GM12878 (cell line): ENCODE measurements at regions of chr1 and their contacts with region 1.

Region 1: DNA sequence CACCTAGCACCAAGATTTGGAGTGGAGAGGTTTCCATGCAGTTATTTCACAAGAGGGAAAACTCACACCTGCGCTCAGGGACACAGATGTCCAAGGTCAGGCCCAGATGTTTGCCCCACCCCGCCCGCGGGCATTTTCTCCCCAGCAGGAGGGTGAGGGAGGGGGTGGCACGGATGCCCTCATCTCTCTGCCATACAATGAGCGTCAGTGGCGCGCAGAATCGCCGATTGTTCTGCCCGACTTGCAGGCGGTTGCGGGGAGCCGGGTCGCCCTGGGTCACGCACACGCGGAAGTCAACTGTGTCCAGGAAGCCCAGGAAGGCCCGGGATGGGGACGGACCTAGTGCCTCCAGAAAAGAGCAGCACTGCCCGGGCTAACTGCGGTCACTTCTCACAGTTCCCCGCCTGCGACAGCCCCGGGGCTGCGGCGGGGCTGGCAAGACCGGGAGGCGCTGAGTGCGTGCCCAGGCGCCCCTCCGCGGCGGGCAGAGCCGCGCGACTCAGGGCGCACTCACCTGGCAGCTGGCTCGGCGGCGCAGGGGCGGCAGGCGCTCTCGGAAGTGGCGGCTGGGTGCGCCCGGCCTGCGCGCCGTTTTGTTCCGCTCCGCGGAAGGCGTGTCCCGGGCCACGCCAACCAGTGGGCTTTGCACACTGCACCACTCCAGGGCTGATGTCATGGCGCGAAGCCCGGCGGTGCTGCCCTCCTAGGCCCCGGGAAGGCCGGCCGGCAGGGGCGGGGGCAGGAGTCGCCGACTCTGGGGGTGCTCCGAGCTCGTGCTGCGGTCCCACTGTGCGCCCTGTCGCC is at the start of gene CSRP1:
- DNase-seq: peak; percentile 39
- ATAC-seq: peak; percentile 91
- H3K4me3 ChIP-seq: peak within 1 kb of the TSS; percentile 95
- H3K27ac ChIP-seq: peak within 1 kb of the TSS; percentile 83
- H3K4me1 ChIP-seq: peaks cover 37% of the 10 kb centered on the region
- H3K27me3 ChIP-seq: no peaks in the 10 kb centered on the region
- CTCF ChIP-seq: peak in 1 of 3 experiments; percentile 21; a peak in 1 of 6 replicates
- EP300 ChIP-seq: no peak
- POLR2A ChIP-seq: peak; percentile 96
- RAD21 ChIP-seq: no peak
- polyA plus RNA-seq, gene CSRP1: 23.4 to 24.3 TPM

Region 2: GRCh38 chr1:201370500-201370899 is 136.3 kb before region 1 on chr1:
- CTCF ChIA-PET with region 1: no interaction called
- POLR2A ChIA-PET with region 1: no interaction called
- RAD21 ChIA-PET with region 1: no interaction called
- SMC1A ChIA-PET with region 1: no interaction called
- in situ Hi-C with region 1: no loop called
- intact Hi-C with region 1: no loop called
- DNase-seq: no peak
- ATAC-seq: no peak
- H3K4me3 ChIP-seq: no peak overlapping the region
- H3K27ac ChIP-seq: no peak overlapping the region
- H3K4me1 ChIP-seq: no peaks in the 10 kb centered on the region
- H3K27me3 ChIP-seq: peaks cover 3 to 6% of the 10 kb centered on the region in 2 experiments; a peak in 3 of 4 replicates
- CTCF ChIP-seq: no peak
- EP300 ChIP-seq: no peak
- POLR2A ChIP-seq: no peak
- RAD21 ChIP-seq: no peak

Region 3: GRCh38 chr1:201495471-201496295 is 11.1 kb before region 1 on chr1:
- CTCF ChIA-PET with region 1: interaction called, 814 read pairs
- POLR2A ChIA-PET with region 1: interaction called, 5 read pairs
- RAD21 ChIA-PET with region 1: interaction called, 6 read pairs
- SMC1A ChIA-PET with region 1: interaction called, 514 read pairs
- in situ Hi-C with region 1: no loop called
- intact Hi-C with region 1: no loop called
- DNase-seq: no peak
- ATAC-seq: no peak
- H3K4me3 ChIP-seq: no peak overlapping the region
- H3K27ac ChIP-seq: no peak overlapping the region
- H3K4me1 ChIP-seq: no peaks in the 10 kb centered on the region
- H3K27me3 ChIP-seq: no peaks in the 10 kb centered on the region
- CTCF ChIP-seq: no peak
- EP300 ChIP-seq: no peak
- POLR2A ChIP-seq: no peak
- RAD21 ChIP-seq: no peak

Region 4: GRCh38 chr1:201859424-201859823 is 352.7 kb after region 1 on chr1:
- CTCF ChIA-PET with region 1: no interaction called
- POLR2A ChIA-PET with region 1: no interaction called
- RAD21 ChIA-PET with region 1: no interaction called
- SMC1A ChIA-PET with region 1: no interaction called
- in situ Hi-C with region 1: no loop called
- intact Hi-C with region 1: no loop called
- DNase-seq: no peak
- ATAC-seq: no peak
- H3K4me3 ChIP-seq: no peak overlapping the region
- H3K27ac ChIP-seq: no peak overlapping the region
- H3K4me1 ChIP-seq: no peaks in the 10 kb centered on the region
- H3K27me3 ChIP-seq: no peaks in the 10 kb centered on the region
- CTCF ChIP-seq: no peak
- EP300 ChIP-seq: no peak
- POLR2A ChIP-seq: no peak
- RAD21 ChIP-seq: no peak